Psoas muscle (tissue), 8 donors: ENCODE measurements at regions of chr7 and their contacts with region 1.

Region 1: GRCh38 chr7:25752967-25753791 is 398.8 kb upstream of the NFE2L3 start:
- DNase-seq: peak; percentile 27 to 72
- ATAC-seq: peak; percentile 82 to 92 (median 90)
- H3K4me3 ChIP-seq: no peak overlapping the region
- H3K27ac ChIP-seq: peak overlapping the region; percentile 86
- H3K4me1 ChIP-seq: peaks cover 47% of the 10 kb centered on the region
- H3K27me3 ChIP-seq: no peaks in the 10 kb centered on the region
- CTCF ChIP-seq: no peak

Region 2: DNA sequence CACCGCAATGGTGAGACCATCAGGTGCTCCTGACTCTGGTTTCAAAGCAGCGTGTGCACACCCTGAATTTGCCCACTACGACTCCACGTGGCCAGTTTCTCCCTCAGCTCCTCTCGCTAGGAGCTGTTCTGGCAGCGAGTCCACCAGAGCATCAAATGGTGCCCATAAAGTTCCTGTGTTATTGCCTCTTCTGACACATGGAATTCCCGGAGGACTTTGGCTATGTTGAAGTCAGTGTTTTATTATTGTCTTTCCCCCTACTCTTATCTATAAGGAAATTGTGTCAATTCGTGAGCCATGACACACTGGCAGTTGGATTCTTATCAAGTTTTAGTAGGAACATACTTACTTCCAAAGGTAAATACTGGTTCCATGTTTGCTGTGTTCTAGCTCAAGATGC is 471.0 kb before region 1 on chr7:
- intact Hi-C with region 1: no loop called
- DNase-seq: no peak
- ATAC-seq: no peak
- H3K4me3 ChIP-seq: no peak overlapping the region
- H3K27ac ChIP-seq: no peak overlapping the region
- H3K4me1 ChIP-seq: no peaks in the 10 kb centered on the region
- H3K27me3 ChIP-seq: no peaks in the 10 kb centered on the region
- CTCF ChIP-seq: no peak

Region 3: DNA sequence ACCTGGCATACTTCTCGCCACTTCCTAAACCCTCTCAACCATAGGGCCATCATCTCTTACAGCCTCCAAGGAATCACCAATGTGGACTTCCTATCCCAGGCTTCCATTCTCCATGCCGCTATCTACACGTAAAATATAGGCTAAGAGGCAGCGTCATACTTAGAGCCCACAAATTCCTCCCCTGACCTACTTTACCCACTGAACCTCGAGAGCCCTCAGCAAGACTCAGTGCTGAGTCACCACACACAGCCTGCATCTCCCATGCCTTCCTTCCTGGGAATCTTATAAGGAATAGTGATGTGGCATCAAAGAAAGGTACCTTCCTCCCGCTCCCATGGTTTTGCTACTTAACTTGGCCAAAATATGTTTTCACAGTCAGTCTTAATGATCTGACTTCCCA is 36.8 kb before region 1 on chr7:
- intact Hi-C with region 1: loop called in 1 of 2 experiments (anchors 5 kb)
- DNase-seq: no peak
- ATAC-seq: peak; percentile 47 to 62 (median 56)
- H3K4me3 ChIP-seq: no peak overlapping the region
- H3K27ac ChIP-seq: no peak overlapping the region
- H3K4me1 ChIP-seq: peaks cover 40% of the 10 kb centered on the region
- H3K27me3 ChIP-seq: no peaks in the 10 kb centered on the region
- CTCF ChIP-seq: no peak

Region 4: DNA sequence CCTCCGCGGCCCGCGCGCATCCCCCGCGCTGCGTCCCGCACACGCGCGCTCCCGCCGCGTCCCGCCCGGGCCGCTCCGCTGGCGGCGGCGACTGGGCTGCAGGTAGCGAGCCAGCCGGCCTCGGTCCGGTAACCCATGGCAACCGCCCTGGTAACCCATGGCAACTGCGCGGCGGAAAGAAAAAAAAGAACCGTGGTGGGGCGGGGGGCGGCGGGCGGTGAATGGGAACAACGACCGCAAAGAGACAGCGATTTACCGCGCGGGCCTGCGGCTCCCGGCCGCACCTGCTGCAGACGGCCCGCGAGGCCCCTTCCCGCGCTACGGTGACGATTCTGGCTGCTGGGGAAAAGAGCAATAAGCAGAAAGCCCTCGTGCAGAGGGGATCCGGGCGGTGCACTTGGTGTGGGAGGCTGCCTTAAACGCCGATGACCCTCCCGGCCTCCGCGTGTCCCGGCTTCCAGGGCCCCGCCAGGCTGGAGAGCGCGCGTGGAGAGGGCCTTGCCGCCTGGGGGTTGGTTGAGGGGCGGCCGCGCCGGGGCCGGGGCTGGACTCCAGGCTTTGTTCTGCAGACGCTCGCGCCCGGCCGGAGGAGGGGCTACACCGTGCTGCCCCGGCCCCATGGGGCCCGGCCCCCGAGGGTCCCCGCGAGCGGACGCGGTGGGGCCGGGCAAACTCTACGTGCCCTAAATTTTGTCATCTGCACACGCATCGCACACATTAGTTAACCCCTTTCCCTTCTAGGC is 623.2 kb after region 1 on chr7:
- intact Hi-C with region 1: no loop called
- DNase-seq: peak; percentile 28 to 60
- ATAC-seq: peak; percentile 25 to 47 (median 43)
- H3K4me3 ChIP-seq: peak overlapping the region; percentile 55
- H3K27ac ChIP-seq: no peak overlapping the region
- H3K4me1 ChIP-seq: peaks cover 5% of the 10 kb centered on the region
- H3K27me3 ChIP-seq: peaks cover 6 to 81% (median 19%) of the 10 kb centered on the region in 3 donors
- CTCF ChIP-seq: no peak